Activated CD8-positive, alpha-beta memory T cell treated with anti-CD3 and anti-CD28 coated beads, Interleukin-2, amount 10 ng/mL, durations not matched to agents 7 days and 5 days (primary cell): ENCODE measurements at regions of chr10 and their contacts with region 1.

Region 1: DNA sequence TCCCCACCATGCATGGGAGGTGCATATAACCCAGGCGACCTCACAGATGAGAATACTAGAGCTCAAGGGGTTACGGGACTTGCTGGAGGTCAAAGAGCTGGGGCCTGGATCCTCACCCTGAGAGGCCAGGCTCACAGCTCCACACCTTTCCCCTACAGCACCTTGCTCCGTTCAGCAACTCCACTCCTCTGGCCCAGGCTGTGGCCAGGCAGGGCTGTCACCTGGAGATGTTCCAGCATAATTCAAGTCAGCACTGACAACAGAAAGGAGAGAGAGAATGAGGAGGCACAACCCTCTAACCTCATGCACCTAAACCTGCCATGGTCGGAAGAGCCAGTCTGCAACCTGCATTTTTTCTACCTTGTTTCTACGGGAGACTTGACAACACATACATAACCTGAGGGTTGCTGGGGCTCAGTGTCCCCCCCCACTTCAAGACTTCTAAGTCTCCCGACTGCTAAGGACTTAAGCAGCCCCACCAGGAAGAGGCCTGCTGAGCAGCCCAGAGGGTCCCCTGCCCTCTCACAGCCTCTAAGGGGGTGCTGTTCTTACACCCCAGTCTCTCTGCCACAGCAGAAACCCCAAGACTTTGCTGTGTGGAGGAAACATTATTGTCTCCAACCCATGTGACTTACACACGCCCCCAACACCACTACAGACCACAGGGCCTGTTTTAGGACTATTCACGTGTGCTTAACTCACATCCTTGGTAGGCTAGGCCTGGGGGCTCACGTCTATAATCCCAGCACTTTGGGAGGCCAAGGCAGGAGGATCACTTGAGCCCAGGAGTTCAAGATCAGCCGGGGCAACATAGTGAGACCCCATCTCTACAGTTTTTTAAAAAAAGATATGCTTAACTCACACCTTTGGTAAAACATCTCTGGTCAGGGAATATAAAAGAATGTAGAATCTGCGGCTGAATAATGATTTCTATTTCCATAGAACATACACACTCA is 175.6 kb downstream of the FAM107B start:
- DNase-seq: no peak
- ATAC-seq: peak; percentile 6
- H3K4me3 Mint-ChIP-seq: no peak overlapping the region
- H3K27ac Mint-ChIP-seq: peak overlapping the region; percentile 65
- H3K4me1 Mint-ChIP-seq: peaks cover 68% of the 10 kb centered on the region
- H3K27me3 Mint-ChIP-seq: no peaks in the 10 kb centered on the region

Region 2: GRCh38 chr10:14588084-14588937 is 10.8 kb before region 1 on chr10:
- CTCF ChIA-PET with region 1: interaction called, 10 read pairs
- DNase-seq: peak; percentile 80
- ATAC-seq: peak; percentile 72
- H3K4me3 Mint-ChIP-seq: peak overlapping the region; percentile 60
- H3K27ac Mint-ChIP-seq: peak overlapping the region; percentile 94
- H3K4me1 Mint-ChIP-seq: peaks cover 90% of the 10 kb centered on the region
- H3K27me3 Mint-ChIP-seq: no peaks in the 10 kb centered on the region

Region 3: GRCh38 chr10:14611968-14612693 is 13.0 kb after region 1 on chr10:
- CTCF ChIA-PET with region 1: no interaction called
- DNase-seq: no peak
- ATAC-seq: no peak
- H3K4me3 Mint-ChIP-seq: no peak overlapping the region
- H3K27ac Mint-ChIP-seq: no peak overlapping the region
- H3K4me1 Mint-ChIP-seq: peaks cover 16% of the 10 kb centered on the region
- H3K27me3 Mint-ChIP-seq: no peaks in the 10 kb centered on the region

Region 4: GRCh38 chr10:14801723-14802122 is 202.6 kb after region 1 on chr10:
- CTCF ChIA-PET with region 1: no interaction called
- DNase-seq: no peak
- ATAC-seq: no peak
- H3K4me3 Mint-ChIP-seq: no peak overlapping the region
- H3K27ac Mint-ChIP-seq: no peak overlapping the region
- H3K4me1 Mint-ChIP-seq: no peaks in the 10 kb centered on the region
- H3K27me3 Mint-ChIP-seq: peaks cover 22% of the 10 kb centered on the region